Sigmoid colon (tissue), 7 donors: ENCODE measurements at regions of chr2 and their contacts with region 1.

Region 1: GRCh38 chr2:43219383-43220228 is 6.8 kb downstream of the ZFP36L2 start:
- DNase-seq: peak; percentile 95
- H3K4me3 ChIP-seq: peak overlapping the region; percentile 22 to 93 (median 56)
- H3K27ac ChIP-seq: peak overlapping the region; percentile 99 to 100 (median 100)
- H3K4me1 ChIP-seq: peaks cover 0 to 58% (median 55%) of the 10 kb centered on the region in 4 donors
- H3K27me3 ChIP-seq: no peaks in the 10 kb centered on the region
- CTCF ChIP-seq: no peak
- EP300 ChIP-seq: no peak
- POLR2A ChIP-seq: peak; percentile 60 to 68

Region 2: DNA sequence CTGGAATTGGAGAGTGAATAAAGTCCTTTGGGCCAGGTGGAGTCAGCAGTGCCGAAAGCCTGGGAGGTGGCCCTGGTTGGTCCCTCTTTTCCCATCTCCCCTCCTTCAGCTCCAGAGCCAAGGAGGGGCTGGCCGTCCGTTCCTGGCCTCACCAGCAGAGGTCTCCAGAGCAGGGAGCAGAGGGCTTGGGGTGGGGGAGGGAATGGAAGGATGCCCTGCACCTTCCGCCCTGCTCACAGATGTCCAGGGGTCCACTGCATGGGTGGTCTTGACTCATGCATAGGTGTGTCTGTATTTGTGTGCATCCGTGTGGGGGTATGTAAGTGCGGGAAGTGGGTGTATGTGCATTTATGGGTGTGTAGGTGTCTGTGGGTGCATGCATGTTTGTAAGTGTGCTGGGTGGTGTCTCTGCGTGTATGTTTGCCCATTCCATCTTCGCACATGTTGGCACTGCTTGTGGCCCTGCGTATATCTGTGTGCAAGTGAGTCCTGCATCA is 195.0 kb before region 1 on chr2:
- intact Hi-C with region 1: loop called (anchors 2 kb)
- DNase-seq: peak; percentile 87
- H3K4me3 ChIP-seq: no peak overlapping the region
- H3K27ac ChIP-seq: peak overlapping the region in 2 of 4 donors; percentile 17 to 48
- H3K4me1 ChIP-seq: peaks cover 0 to 15% (median 11%) of the 10 kb centered on the region in 4 donors
- H3K27me3 ChIP-seq: no peaks in the 10 kb centered on the region
- CTCF ChIP-seq: peak; percentile 86 to 95 (median 90)
- EP300 ChIP-seq: no peak
- POLR2A ChIP-seq: no peak

Region 3: DNA sequence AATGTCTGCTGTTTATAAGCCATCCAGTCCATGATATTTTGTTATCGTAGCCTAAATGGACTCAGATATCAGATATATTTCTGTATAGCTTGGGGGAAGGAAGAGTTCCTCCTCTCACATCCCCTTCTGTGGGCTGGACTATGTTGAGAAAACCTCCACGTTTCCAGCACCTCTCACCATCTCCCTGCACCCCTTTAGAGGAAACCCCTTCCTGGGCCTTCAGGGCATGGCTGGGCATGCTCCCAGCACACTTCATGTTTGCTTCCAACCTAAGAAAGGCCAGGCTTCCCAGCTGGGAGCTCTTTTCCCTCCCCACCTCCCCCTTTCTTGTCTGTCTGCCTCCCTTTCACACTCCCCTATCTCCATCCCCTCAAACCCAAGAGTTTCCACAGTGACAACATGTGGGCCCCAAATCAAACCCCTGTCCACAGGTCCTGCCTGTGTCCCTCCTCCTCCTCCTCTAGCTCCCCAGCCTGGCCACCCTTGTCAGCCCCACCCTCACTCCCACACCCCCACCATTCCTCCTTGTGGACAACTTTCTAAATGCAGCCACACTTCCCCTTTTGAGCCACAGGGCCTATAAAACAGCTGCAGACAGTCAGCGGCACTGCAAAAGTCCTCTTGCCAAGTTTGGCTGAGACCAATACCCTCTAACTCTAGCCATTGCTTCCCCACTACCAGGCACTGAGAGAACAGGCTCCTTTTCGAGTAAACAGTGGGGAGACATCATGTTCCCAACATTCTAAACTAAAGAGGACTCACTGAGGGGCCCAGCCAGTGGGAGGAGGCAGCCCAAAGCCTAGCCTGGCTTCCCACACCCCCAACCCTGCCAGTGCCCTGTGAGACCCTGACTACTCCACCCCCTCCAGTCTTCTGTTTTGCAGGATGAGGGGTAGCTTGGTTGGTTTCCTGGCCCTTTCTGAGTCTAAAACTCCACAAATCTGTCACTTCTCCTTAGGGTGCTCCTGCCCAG is 113.7 kb before region 1 on chr2:
- intact Hi-C with region 1: loop called (anchors 5 kb)
- DNase-seq: peak; percentile 90
- H3K4me3 ChIP-seq: no peak overlapping the region
- H3K27ac ChIP-seq: peak overlapping the region; percentile 75 to 86 (median 82)
- H3K4me1 ChIP-seq: peaks cover 0 to 90% (median 68%) of the 10 kb centered on the region in 4 donors
- H3K27me3 ChIP-seq: no peaks in the 10 kb centered on the region
- CTCF ChIP-seq: peak; percentile 46 to 81 (median 74)
- EP300 ChIP-seq: peak in 2 of 4 donors; percentile 31 to 38
- POLR2A ChIP-seq: no peak